Endothelial cell of umbilical vein (primary cell): ENCODE measurements at regions of chr14 and their contacts with region 1.

Region 1: GRCh38 chr14:50447461-50447860 is 50.8 kb upstream of the CDKL1 start:
- DNase-seq: peak; percentile 81
- H3K4me3 ChIP-seq: no peak overlapping the region
- H3K27ac ChIP-seq: peak overlapping the region; percentile 78
- H3K4me1 ChIP-seq: peaks cover 16% of the 10 kb centered on the region
- H3K27me3 ChIP-seq: no peaks in the 10 kb centered on the region
- CTCF ChIP-seq: no peak
- POLR2A ChIP-seq: no peak

Region 2: GRCh38 chr14:50396631-50397390 is 50.6 kb before region 1 on chr14 and contains the start of gene CDKL1:
- CTCF ChIA-PET with region 1: no interaction called
- POLR2A ChIA-PET with region 1: interaction called, 3 read pairs
- dilution Hi-C with region 1: no loop called
- intact Hi-C with region 1: loop called (anchors 5 kb)
- DNase-seq: peak; percentile 75
- H3K4me3 ChIP-seq: peak within 1 kb of the TSS; percentile 72 to 97 (median 88)
- H3K27ac ChIP-seq: peak within 1 kb of the TSS; percentile 48
- H3K4me1 ChIP-seq: peaks cover 15% of the 10 kb centered on the region
- H3K27me3 ChIP-seq: no peaks in the 10 kb centered on the region
- CTCF ChIP-seq: no peak
- POLR2A ChIP-seq: peak; percentile 60
- total RNA-seq, gene CDKL1: 9.7 and 14.2 TPM in 2 replicates